ENCODE measurements at regions of chr11 and their contacts with region 1.

Region 1: GRCh38 chr11:20243974-20244373 is 83.7 kb upstream of the DBX1 start:
- DNase-seq: peak; percentile 16
- H3K4me3 Mint-ChIP-seq: no peak overlapping the region
- H3K27ac Mint-ChIP-seq: no peak overlapping the region
- H3K4me1 Mint-ChIP-seq: no peaks in the 10 kb centered on the region
- H3K27me3 Mint-ChIP-seq: peaks cover 80% of the 10 kb centered on the region
- CTCF ChIP-seq: peak; percentile 30

Region 2: GRCh38 chr11:20337526-20338154 is 93.7 kb after region 1 on chr11:
- CTCF ChIA-PET with region 1: interaction called, 7 read pairs
- POLR2A ChIA-PET with region 1: no interaction called
- intact Hi-C with region 1: loop called (anchors 2 kb)
- DNase-seq: peak; percentile 46
- H3K4me3 Mint-ChIP-seq: no peak overlapping the region
- H3K27ac Mint-ChIP-seq: no peak overlapping the region
- H3K4me1 Mint-ChIP-seq: no peaks in the 10 kb centered on the region
- H3K27me3 Mint-ChIP-seq: peaks cover 97% of the 10 kb centered on the region
- CTCF ChIP-seq: peak; percentile 42

Measured in MCF 10A (cell line).